ENCODE measurements at regions of chr1 and their contacts with region 1.

Region 1: DNA sequence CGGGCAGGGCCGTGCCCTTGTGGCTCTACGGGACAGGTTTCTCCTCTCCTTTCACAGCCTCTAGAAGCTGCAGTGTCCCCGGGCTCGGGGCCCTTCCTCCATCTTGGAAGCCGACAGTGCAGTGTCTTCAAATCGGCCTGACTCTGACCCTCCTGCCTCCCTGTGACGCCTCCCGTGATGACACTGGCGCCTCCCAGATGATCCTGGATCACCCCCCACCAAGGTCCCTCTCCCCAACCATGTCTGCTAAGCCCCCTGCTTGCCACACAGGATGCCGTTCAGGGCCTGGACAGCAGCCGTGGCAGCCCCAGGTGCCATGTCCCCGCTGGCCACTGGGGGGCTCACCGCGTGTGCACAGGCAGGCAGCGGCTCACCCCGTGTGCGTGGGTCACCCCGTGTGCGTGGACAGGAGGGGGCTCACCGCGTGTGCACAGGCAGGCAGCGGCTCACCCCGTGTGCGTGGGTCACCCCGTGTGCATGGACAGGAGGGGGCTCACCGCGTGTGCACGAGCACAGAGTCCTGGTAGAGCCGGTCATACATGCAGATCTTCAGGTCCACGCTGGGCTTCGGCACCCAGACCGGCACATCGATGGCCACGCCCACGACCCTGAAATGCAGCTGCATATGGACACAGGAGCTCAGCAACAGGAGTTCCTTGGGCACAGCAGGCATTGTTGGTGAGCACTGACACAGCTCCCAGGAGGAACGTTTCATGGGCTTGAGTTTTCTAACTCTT is 24.9 kb upstream of the TMEM52 start:
- DNase-seq: peak in 1 of 2 donors; percentile 55
- H3K4me3 ChIP-seq: no peak overlapping the region
- H3K27ac ChIP-seq: no peak overlapping the region
- H3K4me1 ChIP-seq: peaks cover 0 to 9% (median 0%) of the 10 kb centered on the region in 4 donors
- H3K27me3 ChIP-seq: peaks cover 0 to 76% of the 10 kb centered on the region in 2 donors
- CTCF ChIP-seq: peak; percentile 66 to 86

Region 2: DNA sequence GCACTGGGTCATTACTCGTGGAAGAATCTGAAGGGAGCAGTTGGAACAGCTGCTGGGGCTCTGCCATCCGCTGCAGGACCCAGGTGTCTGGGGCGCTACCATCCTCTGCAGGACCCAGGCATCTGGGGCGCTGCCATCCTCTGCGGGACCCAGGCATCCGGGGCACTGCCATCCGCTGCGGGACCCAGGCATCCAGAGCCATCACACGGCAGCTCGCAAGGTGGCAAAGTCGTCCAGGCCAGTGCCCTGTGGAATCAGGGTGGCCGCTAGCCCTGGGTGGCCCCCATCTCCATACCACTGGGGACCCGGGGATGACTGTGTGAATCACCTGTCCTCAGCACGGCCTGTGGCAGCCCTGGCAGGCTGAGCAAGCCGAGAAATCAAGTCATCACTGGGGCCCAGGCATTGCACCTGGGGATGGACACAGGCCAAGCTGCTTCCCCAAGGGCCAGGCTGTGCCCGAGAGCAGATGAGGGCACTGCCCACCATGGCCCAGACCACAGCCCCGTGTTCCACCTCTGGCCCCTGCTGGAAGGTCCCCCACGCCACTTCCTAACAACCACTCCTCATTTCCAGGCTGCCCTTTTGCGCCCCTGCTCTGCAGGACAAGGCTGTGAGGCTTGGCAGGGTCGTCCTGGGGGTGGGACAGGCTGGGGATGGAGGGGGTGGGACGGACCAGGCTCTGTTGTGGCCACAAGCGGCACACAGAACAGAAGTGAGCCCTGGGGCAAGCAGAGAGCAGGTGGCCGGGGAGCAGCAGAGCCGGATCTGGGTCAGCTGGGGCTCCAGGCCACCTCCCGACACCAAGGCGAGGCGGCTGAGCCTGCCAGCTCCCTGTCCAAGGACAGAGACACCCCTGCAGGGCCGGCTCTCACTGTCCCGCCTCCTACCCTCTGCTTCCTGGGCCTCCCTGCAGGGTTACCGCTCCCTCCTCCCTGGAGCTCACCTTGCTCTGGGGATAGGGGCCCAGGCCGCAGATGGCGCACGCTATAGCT is 87.8 kb after region 1 on chr1:
- intact Hi-C with region 1: loop called (anchors 5 kb)
- DNase-seq: no peak
- H3K4me3 ChIP-seq: no peak overlapping the region
- H3K27ac ChIP-seq: no peak overlapping the region
- H3K4me1 ChIP-seq: no peaks in the 10 kb centered on the region
- H3K27me3 ChIP-seq: peaks cover 0 to 90% of the 10 kb centered on the region in 2 donors
- CTCF ChIP-seq: no peak

Measured in tibial artery (tissue), 4 donors.